ENCODE measurements at regions of chr5 and their contacts with region 1.

Region 1: GRCh38 chr5:139273572-139274289 is 19.8 kb upstream of the MATR3 start:
- ATAC-seq: peak; percentile 86 to 95 (median 90)
- H3K4me3 ChIP-seq: peak overlapping the region; percentile 25 to 39 (median 32)
- H3K27ac ChIP-seq: peak overlapping the region; percentile 47 to 53
- H3K4me1 ChIP-seq: peaks cover 25 to 28% of the 10 kb centered on the region in 2 donors

Region 2: GRCh38 chr5:138575194-138576015 is 698.3 kb before region 1 on chr5 and contains the start of gene HSPA9:
- in situ Hi-C with region 1: loop called in 3 of 9 experiments (anchors 25 kb)
- ATAC-seq: peak; percentile 83 to 93 (median 92)
- H3K4me3 ChIP-seq: peak within 1 kb of the TSS; percentile 87 to 99 (median 92)
- H3K27ac ChIP-seq: peak within 1 kb of the TSS; percentile 100
- H3K4me1 ChIP-seq: peaks cover 11 to 17% of the 10 kb centered on the region in 2 donors
- total RNA-seq, gene HSPA9: 195 to 371 (median 307) TPM

Region 3: GRCh38 chr5:138641547-138642298 is 632.0 kb before region 1 on chr5:
- in situ Hi-C with region 1: loop called in 1 of 9 experiments (anchors 25 kb)
- ATAC-seq: peak; percentile 48 to 97 (median 57)
- H3K4me3 ChIP-seq: no peak overlapping the region
- H3K27ac ChIP-seq: no peak overlapping the region
- H3K4me1 ChIP-seq: peaks cover 34 to 39% of the 10 kb centered on the region in 2 donors

Region 4: GRCh38 chr5:138824924-138825863 is 448.5 kb before region 1 on chr5:
- in situ Hi-C with region 1: loop called in 1 of 9 experiments (anchors 25 kb)
- ATAC-seq: peak in 3 of 8 experiments; percentile 62 to 81 (median 76)
- H3K4me3 ChIP-seq: no peak overlapping the region
- H3K27ac ChIP-seq: no peak overlapping the region
- H3K4me1 ChIP-seq: no peaks in the 10 kb centered on the region

Region 5: DNA sequence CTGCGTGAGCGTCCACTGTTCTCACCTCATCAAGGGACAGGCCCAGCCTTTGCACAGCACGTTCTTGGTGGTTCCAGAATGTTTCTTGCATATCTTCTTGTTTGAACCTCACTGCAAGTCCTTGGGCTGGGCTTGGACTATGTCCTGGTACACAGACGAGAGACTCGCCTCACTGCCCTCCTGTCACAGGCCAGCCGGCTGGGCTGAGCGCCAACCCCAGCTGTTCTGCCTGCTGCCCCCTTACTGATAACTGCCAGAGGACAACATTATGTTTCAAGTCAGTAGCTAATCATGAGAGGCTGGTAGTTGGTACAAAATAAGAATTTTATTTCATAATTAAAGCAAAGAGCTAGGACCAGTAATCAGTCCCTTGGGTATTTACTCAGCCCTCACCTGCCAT is 345.8 kb before region 1 on chr5:
- in situ Hi-C with region 1: loop called in 1 of 9 experiments (anchors 25 kb)
- ATAC-seq: peak in 1 of 8 experiments; percentile 51
- H3K4me3 ChIP-seq: no peak overlapping the region
- H3K27ac ChIP-seq: no peak overlapping the region
- H3K4me1 ChIP-seq: no peaks in the 10 kb centered on the region

Region 6: DNA sequence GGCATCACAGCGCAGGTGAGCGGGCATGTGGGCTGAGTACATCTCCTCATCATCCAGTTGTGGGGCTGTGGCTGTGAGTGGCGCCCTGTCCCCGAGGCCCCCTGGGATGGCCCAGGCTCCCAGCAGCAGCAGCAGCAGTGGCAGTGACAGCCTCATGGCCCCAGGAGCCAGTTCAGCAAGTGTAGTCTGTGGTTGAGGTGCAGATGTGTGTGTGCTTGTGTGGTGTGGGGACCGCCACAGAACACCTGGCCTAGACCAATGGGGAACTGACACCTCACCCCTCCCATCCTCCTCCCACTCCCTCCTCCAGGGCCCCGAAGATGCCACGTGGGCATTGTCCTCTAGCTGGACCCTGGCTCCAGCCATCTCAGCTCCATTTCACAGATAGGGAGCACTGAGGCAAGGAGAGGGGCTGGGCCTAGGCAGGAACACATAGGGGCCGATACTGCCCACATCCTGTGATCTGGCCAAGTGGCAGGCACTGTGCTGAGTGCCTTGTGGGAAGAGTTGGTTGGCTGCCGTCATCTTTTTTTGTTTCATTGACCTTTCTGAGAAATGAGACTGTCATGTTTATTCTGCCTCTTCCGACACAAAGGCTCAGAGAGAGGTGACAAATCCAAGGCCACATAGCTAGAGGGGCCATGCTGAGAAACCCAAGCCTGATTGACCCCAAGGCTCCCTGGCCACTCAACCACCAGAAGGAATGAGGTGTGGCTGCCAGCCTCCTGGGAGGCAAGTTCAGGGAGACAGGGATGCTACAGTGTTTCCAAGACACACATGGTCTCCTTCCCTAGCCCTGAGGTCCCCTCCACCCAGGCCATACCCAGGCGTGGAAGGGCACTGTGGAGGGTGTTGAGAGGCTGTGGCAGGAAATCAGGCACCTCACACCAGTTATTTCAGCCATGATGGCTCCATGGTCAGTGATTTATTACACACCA is 116.2 kb after region 1 on chr5 and contains the start of gene MZB1:
- in situ Hi-C with region 1: no loop called
- ATAC-seq: no peak
- H3K4me3 ChIP-seq: no peak within 1 kb of the TSS
- H3K27ac ChIP-seq: no peak within 1 kb of the TSS
- H3K4me1 ChIP-seq: no peaks in the 10 kb centered on the region
- total RNA-seq, gene MZB1: 0.18 to 0.97 (median 0.44) TPM